ENCODE measurements at regions of chr1 and their contacts with region 1.

Region 1: GRCh38 chr1:75188892-75189291 is 54.7 kb downstream of the LHX8 start:
- DNase-seq: no peak
- H3K4me3 ChIP-seq: no peak overlapping the region
- H3K27ac ChIP-seq: no peak overlapping the region
- H3K4me1 ChIP-seq: no peaks in the 10 kb centered on the region
- H3K27me3 ChIP-seq: peaks cover 5% of the 10 kb centered on the region
- CTCF ChIP-seq: no peak
- EP300 ChIP-seq: no peak
- POLR2A ChIP-seq: no peak

Region 2: GRCh38 chr1:75174031-75174760 is 14.7 kb before region 1 on chr1:
- in situ Hi-C with region 1: no loop called
- intact Hi-C with region 1: loop called (anchors 1 kb)
- DNase-seq: no peak
- H3K4me3 ChIP-seq: no peak overlapping the region
- H3K27ac ChIP-seq: no peak overlapping the region
- H3K4me1 ChIP-seq: no peaks in the 10 kb centered on the region
- H3K27me3 ChIP-seq: no peaks in the 10 kb centered on the region
- CTCF ChIP-seq: no peak
- EP300 ChIP-seq: no peak
- POLR2A ChIP-seq: no peak